Left colon (tissue), 2 donors: ENCODE measurements at regions of chr6 and their contacts with region 1.

Region 1: DNA sequence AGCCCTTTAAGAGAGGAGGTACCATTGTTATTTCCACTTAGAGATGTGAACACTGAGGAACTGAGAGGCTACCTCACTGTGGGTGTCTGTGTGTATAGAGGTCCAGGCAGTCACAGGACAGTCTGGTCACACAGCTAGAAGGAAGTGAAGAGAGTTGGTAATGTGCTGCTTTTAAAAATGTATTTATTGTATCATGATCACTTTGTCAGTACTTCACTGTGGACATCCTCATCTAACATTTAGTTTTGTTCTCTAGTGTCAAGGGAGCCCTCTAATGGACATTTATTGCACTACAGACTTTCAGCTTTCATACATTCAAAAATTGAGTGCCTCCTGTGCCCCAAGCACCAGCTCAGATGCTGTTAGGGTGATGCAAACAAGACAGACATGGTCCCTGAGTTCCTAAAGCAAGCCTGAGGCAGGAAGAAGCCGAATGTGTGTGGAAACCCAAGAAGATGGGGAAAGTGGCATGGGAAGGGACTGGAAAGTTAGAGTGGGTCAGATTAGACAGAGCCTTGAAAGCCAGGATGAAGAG is 123.0 kb downstream of the SLC16A10 start:
- DNase-seq: no peak
- ATAC-seq: peak; percentile 67

Region 2: DNA sequence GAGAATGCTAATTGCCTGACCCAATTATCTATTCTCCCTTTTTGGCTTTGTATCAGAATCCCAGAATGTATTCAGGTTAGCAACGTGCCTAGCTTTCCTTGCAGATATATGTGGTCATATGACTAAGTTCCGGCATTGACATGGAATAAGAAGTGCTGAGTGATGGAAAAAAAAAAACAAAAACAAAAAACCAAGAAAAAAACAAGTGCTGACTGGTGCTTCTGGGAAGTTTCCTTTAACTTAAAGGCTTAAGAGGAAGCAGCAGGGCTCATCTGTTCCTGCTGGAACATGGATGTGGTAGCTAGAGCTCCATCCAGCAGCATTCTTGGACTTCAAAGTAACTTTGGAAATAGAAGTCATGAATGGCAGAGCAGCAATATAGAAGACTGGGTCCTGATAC is 238.8 kb before region 1 on chr6:
- intact Hi-C with region 1: no loop called
- DNase-seq: no peak
- ATAC-seq: no peak

Region 3: GRCh38 chr6:111011360-111012142 is 198.7 kb before region 1 on chr6:
- intact Hi-C with region 1: loop called in 1 of 2 experiments (anchors 5 kb)
- DNase-seq: no peak
- ATAC-seq: peak; percentile 70

Region 4: DNA sequence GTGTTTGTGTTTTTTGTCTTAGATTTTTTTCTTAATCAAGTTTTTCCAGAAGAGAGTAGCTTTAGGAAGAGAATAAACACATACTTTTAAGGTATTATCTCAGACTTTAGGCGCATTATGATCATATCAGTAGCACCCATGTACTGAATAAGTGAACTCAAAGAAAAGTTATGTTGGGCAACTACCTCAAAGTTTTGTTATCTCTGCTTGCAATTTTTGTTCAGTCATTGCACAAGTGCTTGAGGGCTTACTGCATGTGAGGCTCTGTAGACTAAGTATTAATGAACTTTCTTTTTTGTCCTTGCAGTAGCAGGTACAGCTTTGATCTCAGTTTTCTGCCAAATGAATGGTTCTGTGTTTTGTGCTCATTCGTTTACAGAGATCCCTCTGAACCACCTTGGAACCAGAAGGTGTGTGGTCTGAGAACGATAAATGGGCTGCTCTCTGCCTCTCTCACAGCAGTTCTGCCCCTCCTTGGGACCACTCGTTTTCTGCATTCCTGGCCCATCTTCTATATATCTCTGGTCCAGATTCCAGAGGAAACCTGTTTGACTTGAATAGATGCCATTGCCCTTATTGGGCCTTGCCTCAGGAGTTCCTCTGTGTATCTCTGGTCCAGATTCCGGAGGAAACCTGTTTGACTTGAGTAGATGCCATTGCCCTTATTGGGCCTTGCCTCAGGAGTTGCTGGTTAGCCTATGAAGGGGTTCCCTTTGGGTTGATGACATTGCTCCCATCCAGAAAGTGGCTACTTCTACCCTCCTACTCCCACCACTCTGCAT is 66.3 kb after region 1 on chr6:
- intact Hi-C with region 1: no loop called
- DNase-seq: no peak
- ATAC-seq: no peak